Mammary epithelial cell (primary cell): ENCODE measurements at regions of chr22 and their contacts with region 1.

Region 1: GRCh38 chr22:27461470-27461869 is 340.1 kb downstream of the MN1 start:
- DNase-seq: peak; percentile 68
- H3K4me3 ChIP-seq: no peak overlapping the region
- H3K27ac ChIP-seq: no peak overlapping the region
- H3K4me1 ChIP-seq: peaks cover 39% of the 10 kb centered on the region
- H3K27me3 ChIP-seq: no peaks in the 10 kb centered on the region
- CTCF ChIP-seq: no peak

Region 2: DNA sequence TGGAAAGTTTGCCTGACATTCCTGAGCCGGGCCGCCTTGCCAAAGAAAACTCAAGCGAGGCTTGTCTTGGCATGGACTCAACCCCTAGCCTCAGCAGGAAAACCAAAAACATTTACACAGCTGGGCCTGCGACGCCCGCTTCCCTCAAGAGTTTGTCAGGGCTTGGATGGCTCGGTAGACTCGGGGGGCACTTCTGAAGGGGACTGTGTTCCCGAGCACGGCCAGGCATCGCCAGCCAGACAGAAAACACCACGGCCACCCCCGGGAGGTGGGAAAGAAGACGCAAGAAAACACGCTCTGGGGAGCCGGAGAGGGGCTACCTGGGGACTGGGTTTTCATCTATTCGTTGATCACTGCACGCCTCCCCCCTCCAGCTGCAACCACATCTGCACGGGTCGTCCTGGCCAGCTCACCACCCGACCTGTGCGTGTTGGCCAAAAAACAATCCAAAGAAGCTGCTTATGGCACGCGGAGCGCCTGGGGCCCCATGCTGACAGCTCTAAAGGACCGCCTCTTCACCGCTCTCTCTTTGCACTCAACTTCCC is 40.6 kb before region 1 on chr22:
- CTCF ChIA-PET with region 1: no interaction called
- dilution Hi-C with region 1: no loop called
- in situ Hi-C with region 1: no loop called
- intact Hi-C with region 1: loop called (anchors 2 kb)
- DNase-seq: peak; percentile 82
- H3K4me3 ChIP-seq: no peak overlapping the region
- H3K27ac ChIP-seq: peak overlapping the region; percentile 52
- H3K4me1 ChIP-seq: peaks cover 44% of the 10 kb centered on the region
- H3K27me3 ChIP-seq: no peaks in the 10 kb centered on the region
- CTCF ChIP-seq: no peak

Region 3: GRCh38 chr22:27507111-27507611 is 45.7 kb after region 1 on chr22:
- CTCF ChIA-PET with region 1: no interaction called
- dilution Hi-C with region 1: loop called (anchors 5 kb)
- in situ Hi-C with region 1: no loop called
- intact Hi-C with region 1: no loop called
- DNase-seq: no peak
- H3K4me3 ChIP-seq: no peak overlapping the region
- H3K27ac ChIP-seq: no peak overlapping the region
- H3K4me1 ChIP-seq: peaks cover 19% of the 10 kb centered on the region
- H3K27me3 ChIP-seq: no peaks in the 10 kb centered on the region
- CTCF ChIP-seq: no peak

Region 4: GRCh38 chr22:27627444-27627833 is 166.0 kb after region 1 on chr22:
- CTCF ChIA-PET with region 1: no interaction called
- dilution Hi-C with region 1: no loop called
- in situ Hi-C with region 1: no loop called
- intact Hi-C with region 1: no loop called
- DNase-seq: no peak
- H3K4me3 ChIP-seq: no peak overlapping the region
- H3K27ac ChIP-seq: no peak overlapping the region
- H3K4me1 ChIP-seq: no peaks in the 10 kb centered on the region
- H3K27me3 ChIP-seq: no peaks in the 10 kb centered on the region
- CTCF ChIP-seq: no peak